ENCODE measurements at regions of chr1 and their contacts with region 1.

Region 1: GRCh38 chr1:205313563-205314308 is 7.8 kb downstream of the NUAK2 start:
- DNase-seq: peak; percentile 40
- ATAC-seq: peak; percentile 77
- H3K4me3 Mint-ChIP-seq: peak overlapping the region; percentile 60
- H3K27ac Mint-ChIP-seq: peak overlapping the region; percentile 82
- H3K4me1 Mint-ChIP-seq: peaks cover 55% of the 10 kb centered on the region
- H3K27me3 Mint-ChIP-seq: peaks cover 4% of the 10 kb centered on the region

Region 2: DNA sequence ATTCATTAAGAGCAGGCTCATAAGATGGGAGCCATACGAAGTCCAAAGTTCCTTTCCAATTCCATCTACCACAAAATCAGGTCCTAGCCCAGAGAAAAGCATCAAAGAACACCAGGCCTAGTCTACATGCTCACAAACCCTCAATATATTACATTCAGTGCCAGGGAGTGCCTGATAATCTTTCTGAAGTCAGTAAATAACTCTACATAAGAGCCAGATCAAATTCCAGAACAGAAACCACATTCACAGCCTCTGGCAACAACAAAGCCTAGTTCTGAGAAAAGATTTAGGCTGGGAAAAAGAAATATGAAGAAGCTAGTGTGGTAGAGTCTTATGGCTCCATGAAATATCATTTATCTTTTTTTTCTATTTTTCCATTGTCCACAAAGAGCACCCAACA is 151.4 kb before region 1 on chr1:
- CTCF ChIA-PET with region 1: no interaction called
- POLR2A ChIA-PET with region 1: no interaction called
- DNase-seq: no peak
- ATAC-seq: no peak
- H3K4me3 Mint-ChIP-seq: no peak overlapping the region
- H3K27ac Mint-ChIP-seq: no peak overlapping the region
- H3K4me1 Mint-ChIP-seq: peaks cover 14% of the 10 kb centered on the region
- H3K27me3 Mint-ChIP-seq: no peaks in the 10 kb centered on the region

Region 3: GRCh38 chr1:205284343-205285144 is 29.2 kb before region 1 on chr1:
- CTCF ChIA-PET with region 1: interaction called, 1,266 read pairs
- POLR2A ChIA-PET with region 1: interaction called, 45 read pairs
- DNase-seq: peak; percentile 95
- ATAC-seq: peak; percentile 67
- H3K4me3 Mint-ChIP-seq: peak overlapping the region; percentile 74
- H3K27ac Mint-ChIP-seq: peak overlapping the region; percentile 66
- H3K4me1 Mint-ChIP-seq: peaks cover 80% of the 10 kb centered on the region
- H3K27me3 Mint-ChIP-seq: peaks cover 23% of the 10 kb centered on the region

Region 4: GRCh38 chr1:205335643-205336091 is 21.9 kb after region 1 on chr1:
- CTCF ChIA-PET with region 1: interaction called, 17 read pairs
- POLR2A ChIA-PET with region 1: no interaction called
- DNase-seq: peak; percentile 84
- ATAC-seq: peak; percentile 90
- H3K4me3 Mint-ChIP-seq: no peak overlapping the region
- H3K27ac Mint-ChIP-seq: no peak overlapping the region
- H3K4me1 Mint-ChIP-seq: peaks cover 11% of the 10 kb centered on the region
- H3K27me3 Mint-ChIP-seq: peaks cover 38% of the 10 kb centered on the region

Measured in activated CD8-positive, alpha-beta T cell treated with anti-CD3 and anti-CD28 coated beads, Interleukin-2, amount 10 ng/mL, durations not matched to agents 7 days and 5 days (primary cell).